ENCODE measurements at regions of chr3 and their contacts with region 1.

Region 1: GRCh38 chr3:106176734-106177133 is 307.9 kb upstream of the CBLB start:
- DNase-seq: peak in 8 of 9 donors; percentile 59 to 86 (median 78)
- ATAC-seq: peak; percentile 94
- H3K4me3 ChIP-seq: peak overlapping the region; percentile 28
- H3K4me3 Mint-ChIP-seq: peak overlapping the region; percentile 1 to 79 (median 73)
- H3K27ac ChIP-seq: peak overlapping the region; percentile 43
- H3K27ac Mint-ChIP-seq: peak overlapping the region; percentile 50 to 91 (median 87)
- H3K4me1 ChIP-seq: peaks cover 28 to 32% of the 10 kb centered on the region in 2 donors
- H3K4me1 Mint-ChIP-seq: peaks cover 33 to 61% (median 56%) of the 10 kb centered on the region in 7 donors
- H3K27me3 ChIP-seq: no peaks in the 10 kb centered on the region
- H3K27me3 Mint-ChIP-seq: no peaks in the 10 kb centered on the region

Region 2: GRCh38 chr3:105984837-105985236 is 191.9 kb before region 1 on chr3:
- CTCF ChIA-PET with region 1: no interaction called
- POLR2A ChIA-PET with region 1: no interaction called
- intact Hi-C with region 1: loop called in 1 of 2 experiments (anchors 5 kb)
- DNase-seq: no peak
- ATAC-seq: no peak
- H3K4me3 ChIP-seq: peak overlapping the region; percentile 11
- H3K4me3 Mint-ChIP-seq: peak overlapping the region in 3 of 10 donors; percentile 10 to 53 (median 17)
- H3K27ac ChIP-seq: no peak overlapping the region
- H3K27ac Mint-ChIP-seq: no peak overlapping the region
- H3K4me1 ChIP-seq: peaks cover 8 to 12% of the 10 kb centered on the region in 2 donors
- H3K4me1 Mint-ChIP-seq: peaks cover 24 to 41% (median 38%) of the 10 kb centered on the region in 7 donors
- H3K27me3 ChIP-seq: no peaks in the 10 kb centered on the region
- H3K27me3 Mint-ChIP-seq: no peaks in the 10 kb centered on the region

Region 3: GRCh38 chr3:106119614-106120082 is 57.1 kb before region 1 on chr3:
- CTCF ChIA-PET with region 1: no interaction called
- POLR2A ChIA-PET with region 1: no interaction called
- intact Hi-C with region 1: loop called in 1 of 2 experiments (anchors 5 kb)
- DNase-seq: no peak
- ATAC-seq: no peak
- H3K4me3 ChIP-seq: no peak overlapping the region
- H3K4me3 Mint-ChIP-seq: no peak overlapping the region
- H3K27ac ChIP-seq: no peak overlapping the region
- H3K27ac Mint-ChIP-seq: no peak overlapping the region
- H3K4me1 ChIP-seq: no peaks in the 10 kb centered on the region
- H3K4me1 Mint-ChIP-seq: peaks cover 0 to 21% (median 10%) of the 10 kb centered on the region in 7 donors
- H3K27me3 ChIP-seq: no peaks in the 10 kb centered on the region
- H3K27me3 Mint-ChIP-seq: peaks cover 0 to 4% (median 0%) of the 10 kb centered on the region in 5 donors

Region 4: DNA sequence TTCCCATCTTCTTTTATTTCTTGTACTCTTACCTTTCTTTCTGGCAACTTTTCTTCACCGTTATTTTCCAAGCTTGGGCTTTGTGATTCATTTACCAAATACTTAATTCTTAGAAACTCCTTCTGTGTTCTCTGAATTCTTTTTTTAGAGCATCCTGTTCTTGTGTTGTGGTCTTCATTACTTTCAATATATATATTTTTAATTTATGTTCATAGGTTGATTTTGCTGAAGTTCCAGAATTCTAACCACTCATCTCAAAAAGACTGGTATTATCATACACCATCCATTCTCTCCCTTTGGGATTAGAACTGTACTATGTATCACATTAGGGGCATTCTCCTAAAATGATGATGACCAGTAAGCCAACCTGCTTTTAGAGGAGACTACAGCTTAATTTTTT is 54.4 kb after region 1 on chr3:
- CTCF ChIA-PET with region 1: no interaction called
- POLR2A ChIA-PET with region 1: no interaction called
- intact Hi-C with region 1: loop called in 1 of 2 experiments (anchors 2 kb)
- DNase-seq: no peak
- ATAC-seq: no peak
- H3K4me3 ChIP-seq: no peak overlapping the region
- H3K4me3 Mint-ChIP-seq: peak overlapping the region in 9 of 10 donors; percentile 3 to 80 (median 64)
- H3K27ac ChIP-seq: no peak overlapping the region
- H3K27ac Mint-ChIP-seq: peak overlapping the region in 8 of 9 donors; percentile 2 to 90 (median 46)
- H3K4me1 ChIP-seq: peaks cover 4 to 8% of the 10 kb centered on the region in 2 donors
- H3K4me1 Mint-ChIP-seq: peaks cover 10 to 47% (median 37%) of the 10 kb centered on the region in 7 donors
- H3K27me3 ChIP-seq: no peaks in the 10 kb centered on the region
- H3K27me3 Mint-ChIP-seq: no peaks in the 10 kb centered on the region

Region 5: GRCh38 chr3:106242781-106243180 is 66.0 kb after region 1 on chr3:
- CTCF ChIA-PET with region 1: no interaction called
- POLR2A ChIA-PET with region 1: no interaction called
- intact Hi-C with region 1: no loop called
- DNase-seq: no peak
- ATAC-seq: no peak
- H3K4me3 ChIP-seq: no peak overlapping the region
- H3K4me3 Mint-ChIP-seq: no peak overlapping the region
- H3K27ac ChIP-seq: no peak overlapping the region
- H3K27ac Mint-ChIP-seq: peak overlapping the region in 1 of 9 donors; percentile 2
- H3K4me1 ChIP-seq: no peaks in the 10 kb centered on the region
- H3K4me1 Mint-ChIP-seq: peaks cover 0 to 9% (median 0%) of the 10 kb centered on the region in 7 donors
- H3K27me3 ChIP-seq: no peaks in the 10 kb centered on the region
- H3K27me3 Mint-ChIP-seq: no peaks in the 10 kb centered on the region

Region 6: GRCh38 chr3:106428565-106428994 is 251.8 kb after region 1 on chr3:
- CTCF ChIA-PET with region 1: no interaction called
- POLR2A ChIA-PET with region 1: no interaction called
- intact Hi-C with region 1: loop called in 1 of 2 experiments (anchors 10 kb)
- DNase-seq: peak in 1 of 9 donors; percentile 34
- ATAC-seq: no peak
- H3K4me3 ChIP-seq: no peak overlapping the region
- H3K4me3 Mint-ChIP-seq: no peak overlapping the region
- H3K27ac ChIP-seq: no peak overlapping the region
- H3K27ac Mint-ChIP-seq: no peak overlapping the region
- H3K4me1 ChIP-seq: peaks cover 0 to 8% of the 10 kb centered on the region in 2 donors
- H3K4me1 Mint-ChIP-seq: peaks cover 0 to 34% (median 8%) of the 10 kb centered on the region in 7 donors
- H3K27me3 ChIP-seq: no peaks in the 10 kb centered on the region
- H3K27me3 Mint-ChIP-seq: no peaks in the 10 kb centered on the region

Measured in naive thymus-derived CD4-positive, alpha-beta T cell (primary cell).